ENCODE measurements at regions of chr2 and their contacts with region 1.

Region 1: DNA sequence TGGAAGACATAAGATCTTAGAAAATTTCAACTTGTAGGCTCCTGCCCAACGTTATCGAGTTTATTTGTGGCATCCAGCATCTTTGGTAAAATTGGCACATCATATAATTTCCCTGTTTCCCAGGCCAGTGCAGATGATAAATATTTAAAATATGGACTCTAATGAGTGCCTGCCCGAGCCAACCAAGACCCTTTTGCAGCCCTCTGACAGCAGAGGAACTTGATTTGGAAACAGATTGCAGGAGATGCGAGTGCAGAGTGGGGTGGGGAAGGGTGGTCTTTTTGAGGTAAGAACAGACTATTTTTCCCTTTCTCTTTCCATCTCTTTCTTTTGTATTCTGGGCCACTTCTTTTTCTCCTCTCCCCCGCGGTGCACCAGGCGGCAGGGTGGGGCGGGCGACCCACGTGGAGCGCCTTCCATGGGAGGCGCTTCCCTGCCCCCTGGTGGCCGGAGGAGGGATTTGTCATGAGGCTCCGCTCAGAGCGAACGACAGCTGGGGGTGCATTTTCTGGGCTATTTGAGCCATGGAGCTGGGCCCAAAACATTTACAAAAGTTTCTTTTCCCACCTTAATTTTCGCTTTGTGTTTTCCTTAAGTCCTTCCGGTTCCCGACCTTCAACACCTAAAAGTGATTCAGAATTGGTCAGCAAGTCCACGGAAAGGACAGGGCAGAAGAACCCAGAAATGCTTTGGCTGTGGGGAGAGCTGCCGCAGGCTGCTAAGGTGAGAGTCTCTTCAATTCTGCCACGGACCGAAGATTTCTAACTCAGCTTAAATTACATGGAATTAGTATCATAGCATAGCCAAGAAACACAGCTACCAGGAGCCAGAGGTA is 32.7 kb downstream of the LPIN1 start:
- DNase-seq: peak; percentile 72
- H3K4me3 Mint-ChIP-seq: peak overlapping the region; percentile 20
- H3K27ac Mint-ChIP-seq: no peak overlapping the region
- H3K4me1 Mint-ChIP-seq: peaks cover 38% of the 10 kb centered on the region
- H3K27me3 Mint-ChIP-seq: no peaks in the 10 kb centered on the region

Region 2: DNA sequence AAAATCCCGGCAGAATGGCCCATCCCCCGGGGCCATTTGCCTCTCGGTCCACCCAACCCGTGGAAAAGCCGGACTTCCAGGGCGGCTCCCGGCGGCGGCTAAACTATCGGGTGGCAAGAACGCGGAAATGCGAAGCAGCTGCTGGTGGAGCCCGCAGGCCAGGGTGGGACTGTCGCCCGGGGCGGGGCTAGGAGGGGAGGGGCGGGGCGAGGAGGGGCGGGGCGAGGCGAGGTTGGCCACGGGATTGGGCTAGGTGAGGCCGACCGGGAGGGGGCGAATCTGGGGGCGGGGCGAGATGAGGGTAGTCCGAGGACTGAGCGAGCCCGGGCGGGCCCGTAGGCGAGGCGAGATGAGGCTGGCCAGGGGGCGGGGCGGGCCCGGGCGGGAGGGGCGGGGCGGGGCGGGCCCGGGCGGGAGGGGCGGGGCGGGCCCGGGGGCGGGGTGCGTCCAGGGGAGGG is 624.2 kb before region 1 on chr2:
- intact Hi-C with region 1: loop called (anchors 10 kb)
- DNase-seq: peak; percentile 94
- H3K4me3 Mint-ChIP-seq: peak overlapping the region; percentile 83
- H3K27ac Mint-ChIP-seq: peak overlapping the region; percentile 75
- H3K4me1 Mint-ChIP-seq: peaks cover 9% of the 10 kb centered on the region
- H3K27me3 Mint-ChIP-seq: peaks cover 13% of the 10 kb centered on the region

Region 3: GRCh38 chr2:11465497-11466406 is 313.4 kb before region 1 on chr2 and contains the start of gene E2F6:
- intact Hi-C with region 1: loop called (anchors 10 kb)
- DNase-seq: peak; percentile 80
- H3K4me3 Mint-ChIP-seq: peak within 1 kb of the TSS; percentile 96
- H3K27ac Mint-ChIP-seq: peak within 1 kb of the TSS; percentile 86
- H3K4me1 Mint-ChIP-seq: peaks cover 20% of the 10 kb centered on the region
- H3K27me3 Mint-ChIP-seq: no peaks in the 10 kb centered on the region
- total RNA-seq, gene E2F6: 16.8 and 18.2 TPM in 2 replicates

Region 4: GRCh38 chr2:11688222-11689069 is 90.7 kb before region 1 on chr2:
- intact Hi-C with region 1: loop called (anchors 1 kb)
- DNase-seq: peak; percentile 82
- H3K4me3 Mint-ChIP-seq: peak overlapping the region; percentile 51
- H3K27ac Mint-ChIP-seq: peak overlapping the region; percentile 59
- H3K4me1 Mint-ChIP-seq: peaks cover 16% of the 10 kb centered on the region
- H3K27me3 Mint-ChIP-seq: peaks cover 13% of the 10 kb centered on the region

Region 5: GRCh38 chr2:11738589-11739436 is 40.3 kb before region 1 on chr2:
- intact Hi-C with region 1: loop called (anchors 1 kb)
- DNase-seq: no peak
- H3K4me3 Mint-ChIP-seq: no peak overlapping the region
- H3K27ac Mint-ChIP-seq: no peak overlapping the region
- H3K4me1 Mint-ChIP-seq: peaks cover 23% of the 10 kb centered on the region
- H3K27me3 Mint-ChIP-seq: peaks cover 10% of the 10 kb centered on the region

Region 6: GRCh38 chr2:11743846-11744553 is 35.1 kb before region 1 on chr2:
- intact Hi-C with region 1: loop called (anchors 2 kb)
- DNase-seq: peak; percentile 69
- H3K4me3 Mint-ChIP-seq: peak overlapping the region; percentile 22
- H3K27ac Mint-ChIP-seq: peak overlapping the region; percentile 70
- H3K4me1 Mint-ChIP-seq: peaks cover 56% of the 10 kb centered on the region
- H3K27me3 Mint-ChIP-seq: no peaks in the 10 kb centered on the region

Region 7: GRCh38 chr2:11753886-11754699 is 25.0 kb before region 1 on chr2:
- intact Hi-C with region 1: loop called (anchors 1 kb)
- DNase-seq: peak; percentile 52
- H3K4me3 Mint-ChIP-seq: peak overlapping the region; percentile 74
- H3K27ac Mint-ChIP-seq: peak overlapping the region; percentile 93
- H3K4me1 Mint-ChIP-seq: peaks cover 75% of the 10 kb centered on the region
- H3K27me3 Mint-ChIP-seq: no peaks in the 10 kb centered on the region

Measured in activated T-helper 2 cell treated with anti-CD3 and anti-CD28 coated beads, Interferon-gamma antibody, Interleukin-2, Interleukin-4, amounts not matched to agents 10 μg/mL and 5 μg/mL and 100 μg/mL, durations not matched to agents 14 hours and 24 hours and 36 hours (primary cell).